Right cardiac atrium (tissue), 5 donors: ENCODE measurements at regions of chr4 and their contacts with region 1.

Region 1: GRCh38 chr4:1130316-1131186 is 17.2 kb upstream of the RNF212 start:
- DNase-seq: peak; percentile 62 to 85 (median 82)
- ATAC-seq: peak; percentile 93 to 96
- H3K4me3 ChIP-seq: no peak overlapping the region
- H3K27ac ChIP-seq: no peak overlapping the region
- H3K4me1 ChIP-seq: no peaks in the 10 kb centered on the region
- H3K27me3 ChIP-seq: no peaks in the 10 kb centered on the region

Region 2: GRCh38 chr4:825238-825835 is 305.2 kb before region 1 on chr4:
- intact Hi-C with region 1: no loop called
- DNase-seq: peak in 1 of 3 donors; percentile 65
- ATAC-seq: peak; percentile 25 to 26
- H3K4me3 ChIP-seq: peak overlapping the region; percentile 62
- H3K27ac ChIP-seq: no peak overlapping the region
- H3K4me1 ChIP-seq: peaks cover 2% of the 10 kb centered on the region
- H3K27me3 ChIP-seq: no peaks in the 10 kb centered on the region

Region 3: GRCh38 chr4:1266881-1267763 is 136.6 kb after region 1 on chr4:
- intact Hi-C with region 1: loop called in 1 of 4 experiments (anchors 2 kb)
- DNase-seq: no peak
- ATAC-seq: no peak
- H3K4me3 ChIP-seq: no peak overlapping the region
- H3K27ac ChIP-seq: no peak overlapping the region
- H3K4me1 ChIP-seq: no peaks in the 10 kb centered on the region
- H3K27me3 ChIP-seq: no peaks in the 10 kb centered on the region